ENCODE measurements at regions of chr22 and their contacts with region 1.

Region 1: DNA sequence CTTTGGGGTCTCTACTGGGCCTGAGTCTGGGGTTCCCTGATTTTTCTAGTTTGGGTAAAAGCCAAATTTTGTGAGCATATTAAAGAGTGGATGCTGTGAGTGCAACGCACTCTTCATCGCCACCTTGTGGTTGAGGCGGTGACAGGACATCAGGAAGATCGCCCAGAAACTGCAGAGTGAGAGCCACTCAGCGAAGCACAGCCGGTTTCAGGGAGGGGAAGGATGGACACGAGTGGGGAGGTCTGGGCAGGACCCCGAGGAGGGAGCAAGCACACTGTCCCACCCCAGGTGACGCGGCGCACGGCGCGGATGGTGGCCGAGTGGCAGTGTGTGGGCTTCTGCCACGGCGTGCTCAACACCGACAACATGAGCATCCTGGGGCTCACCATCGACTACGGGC is 9.1 kb downstream of the SELENOO start:
- DNase-seq: peak; percentile 49 to 84 (median 72)
- ATAC-seq: peak; percentile 86
- H3K4me3 ChIP-seq: no peak overlapping the region
- H3K4me3 Mint-ChIP-seq: no peak overlapping the region
- H3K27ac ChIP-seq: no peak overlapping the region
- H3K27ac Mint-ChIP-seq: peak overlapping the region; percentile 88
- H3K4me1 ChIP-seq: peaks cover 7% of the 10 kb centered on the region
- H3K4me1 Mint-ChIP-seq: peaks cover 33% of the 10 kb centered on the region
- H3K27me3 ChIP-seq: no peaks in the 10 kb centered on the region
- H3K27me3 Mint-ChIP-seq: no peaks in the 10 kb centered on the region
- CTCF ChIP-seq: peak; percentile 85

Region 2: DNA sequence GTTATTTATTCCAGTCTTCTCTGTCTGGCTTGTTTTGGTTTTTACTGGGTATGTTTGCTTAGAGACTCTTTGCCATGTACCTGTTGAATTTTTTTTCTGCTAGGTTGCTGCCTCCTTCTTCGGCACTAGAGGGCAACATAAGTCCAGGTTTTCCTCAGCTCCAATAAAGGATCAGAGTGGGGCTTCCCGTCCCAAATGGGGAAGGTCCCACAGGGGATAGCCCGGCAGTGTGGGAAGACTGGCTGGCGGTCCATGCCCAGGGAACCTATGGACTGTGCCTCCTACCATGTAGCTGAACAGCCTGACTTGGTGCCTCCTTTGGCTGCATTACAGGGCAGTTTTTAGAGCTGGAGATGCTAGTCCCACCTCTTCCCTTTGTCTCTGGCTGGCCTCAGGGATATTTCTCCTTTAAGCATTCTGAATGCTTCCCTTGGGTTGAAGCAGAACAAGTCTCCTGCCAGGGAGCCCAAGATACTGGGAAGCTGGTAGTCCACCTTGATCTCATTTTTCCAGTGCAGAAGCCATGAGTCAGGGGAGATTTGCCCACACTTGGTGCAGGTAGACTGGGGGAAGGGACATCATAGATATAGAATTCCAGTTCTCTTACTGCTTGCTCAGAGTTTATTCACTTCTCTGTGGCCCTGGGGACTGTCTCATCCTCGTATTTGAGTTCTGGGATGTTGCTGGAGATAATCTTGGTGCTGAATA is 442.4 kb before region 1 on chr22:
- CTCF ChIA-PET with region 1: no interaction called
- POLR2A ChIA-PET with region 1: no interaction called
- intact Hi-C with region 1: loop called in 1 of 2 experiments (anchors 5 kb)
- DNase-seq: peak in 3 of 9 experiments; percentile 62 to 71 (median 64)
- ATAC-seq: peak; percentile 24
- H3K4me3 ChIP-seq: no peak overlapping the region
- H3K4me3 Mint-ChIP-seq: no peak overlapping the region
- H3K27ac ChIP-seq: no peak overlapping the region
- H3K27ac Mint-ChIP-seq: peak overlapping the region; percentile 19
- H3K4me1 ChIP-seq: peaks cover 3% of the 10 kb centered on the region
- H3K4me1 Mint-ChIP-seq: peaks cover 12% of the 10 kb centered on the region
- H3K27me3 ChIP-seq: no peaks in the 10 kb centered on the region
- H3K27me3 Mint-ChIP-seq: no peaks in the 10 kb centered on the region
- CTCF ChIP-seq: peak; percentile 71

Region 3: DNA sequence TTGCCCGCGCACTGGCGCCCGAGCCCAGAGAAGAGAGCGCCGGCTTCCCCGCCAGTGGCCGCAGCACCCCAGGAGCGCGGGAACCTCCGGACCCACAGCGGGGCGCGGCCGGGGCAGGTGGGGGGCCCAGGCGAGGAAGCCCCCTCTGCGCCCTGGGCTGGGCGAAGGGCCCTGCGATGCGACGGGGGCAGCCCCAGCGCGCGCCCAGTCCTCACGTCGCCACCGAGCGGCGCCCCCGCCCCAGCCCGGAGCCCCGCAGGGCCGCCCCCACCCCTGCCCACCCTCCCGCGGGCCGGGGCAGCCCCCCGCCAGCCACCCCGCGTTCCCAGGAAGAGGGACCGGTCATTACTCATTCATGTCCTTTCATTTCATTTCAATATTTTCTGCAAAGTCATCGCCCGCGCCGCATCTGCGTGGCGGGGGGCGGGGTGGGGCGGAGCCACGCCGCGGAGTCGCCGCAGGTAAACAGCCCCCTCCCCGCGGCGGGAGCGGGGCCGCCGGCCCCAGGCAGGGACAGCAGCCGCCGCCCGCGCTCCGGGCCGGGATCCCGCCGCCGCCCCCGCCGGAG is 40.0 kb before region 1 on chr22:
- CTCF ChIA-PET with region 1: no interaction called
- POLR2A ChIA-PET with region 1: no interaction called
- intact Hi-C with region 1: loop called in 1 of 2 experiments (anchors 5 kb)
- DNase-seq: peak in 2 of 9 experiments; percentile 9 to 39
- ATAC-seq: peak; percentile 61
- H3K4me3 ChIP-seq: no peak overlapping the region
- H3K4me3 Mint-ChIP-seq: no peak overlapping the region
- H3K27ac ChIP-seq: no peak overlapping the region
- H3K27ac Mint-ChIP-seq: no peak overlapping the region
- H3K4me1 ChIP-seq: no peaks in the 10 kb centered on the region
- H3K4me1 Mint-ChIP-seq: peaks cover 4% of the 10 kb centered on the region
- H3K27me3 ChIP-seq: peaks cover 9 to 23% of the 10 kb centered on the region in 2 experiments
- H3K27me3 Mint-ChIP-seq: peaks cover 28% of the 10 kb centered on the region
- CTCF ChIP-seq: no peak